Naive thymus-derived CD4-positive, alpha-beta T cell (primary cell): ENCODE measurements at regions of chr11 and their contacts with region 1.

Region 1: DNA sequence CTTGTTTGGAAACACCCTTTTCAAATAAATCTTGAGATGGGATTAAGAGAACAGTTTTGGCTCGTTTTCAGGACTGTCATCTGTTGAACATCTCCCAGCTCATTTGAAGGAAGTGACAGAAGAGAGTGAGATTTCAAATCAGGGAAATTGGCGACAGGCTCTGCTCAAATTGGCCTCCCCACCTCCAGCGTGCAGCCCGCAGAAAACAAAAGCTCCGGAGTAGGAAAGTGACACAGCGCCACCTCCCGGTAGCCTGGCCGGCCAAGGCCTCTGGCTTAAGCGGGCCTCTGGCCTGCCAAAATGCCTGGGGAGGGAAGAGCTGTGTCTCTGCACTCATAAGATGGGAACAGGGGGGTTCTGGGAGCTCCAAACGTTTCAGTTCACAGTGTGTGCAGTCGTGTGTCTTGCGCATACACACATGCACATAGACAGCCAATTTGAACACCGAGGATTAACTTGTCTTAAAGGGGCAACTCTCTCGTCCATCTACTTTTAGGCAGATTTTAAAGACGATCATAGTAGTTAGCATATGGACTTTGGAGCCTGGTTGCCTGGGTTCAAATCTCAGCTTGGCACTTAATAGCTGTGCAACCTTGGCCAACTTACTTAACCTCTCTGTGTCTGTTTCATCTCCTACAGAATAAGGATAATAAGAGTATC is 132.7 kb upstream of the RCN1 start:
- DNase-seq: peak in 8 of 9 donors; percentile 13 to 70 (median 31)
- ATAC-seq: peak; percentile 49
- H3K4me3 ChIP-seq: no peak overlapping the region
- H3K4me3 Mint-ChIP-seq: no peak overlapping the region
- H3K27ac ChIP-seq: no peak overlapping the region
- H3K27ac Mint-ChIP-seq: no peak overlapping the region
- H3K4me1 ChIP-seq: no peaks in the 10 kb centered on the region
- H3K4me1 Mint-ChIP-seq: peaks cover 0 to 7% (median 0%) of the 10 kb centered on the region in 7 donors
- H3K27me3 ChIP-seq: no peaks in the 10 kb centered on the region
- H3K27me3 Mint-ChIP-seq: peaks cover 0 to 13% (median 4%) of the 10 kb centered on the region in 5 donors

Region 2: DNA sequence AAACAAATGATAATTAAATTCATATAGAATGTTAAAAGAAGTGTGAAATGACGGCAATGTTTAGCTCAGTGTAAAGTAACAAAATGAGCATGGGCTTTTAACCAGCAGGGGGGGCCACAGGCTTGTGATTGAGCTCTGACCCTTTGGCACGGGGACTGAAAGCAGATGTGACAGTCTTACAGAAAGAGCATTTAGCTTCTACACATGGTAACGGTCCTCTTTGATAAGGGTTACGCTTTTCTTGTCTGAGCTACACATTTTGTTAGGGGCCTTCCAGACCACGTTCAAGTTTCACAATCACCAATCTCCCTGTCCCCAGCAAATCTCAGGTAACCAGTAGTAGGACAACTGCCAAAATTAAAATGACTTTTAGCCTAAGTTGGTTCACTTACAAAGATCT is 851.1 kb before region 1 on chr11:
- CTCF ChIA-PET with region 1: no interaction called
- POLR2A ChIA-PET with region 1: no interaction called
- intact Hi-C with region 1: loop called in 1 of 2 experiments (anchors 1 kb)
- DNase-seq: peak in 6 of 9 donors; percentile 1 to 25 (median 20)
- ATAC-seq: no peak
- H3K4me3 ChIP-seq: no peak overlapping the region
- H3K4me3 Mint-ChIP-seq: no peak overlapping the region
- H3K27ac ChIP-seq: no peak overlapping the region
- H3K27ac Mint-ChIP-seq: no peak overlapping the region
- H3K4me1 ChIP-seq: no peaks in the 10 kb centered on the region
- H3K4me1 Mint-ChIP-seq: no peaks in the 10 kb centered on the region
- H3K27me3 ChIP-seq: no peaks in the 10 kb centered on the region
- H3K27me3 Mint-ChIP-seq: peaks cover 0 to 10% (median 0%) of the 10 kb centered on the region in 5 donors

Region 3: DNA sequence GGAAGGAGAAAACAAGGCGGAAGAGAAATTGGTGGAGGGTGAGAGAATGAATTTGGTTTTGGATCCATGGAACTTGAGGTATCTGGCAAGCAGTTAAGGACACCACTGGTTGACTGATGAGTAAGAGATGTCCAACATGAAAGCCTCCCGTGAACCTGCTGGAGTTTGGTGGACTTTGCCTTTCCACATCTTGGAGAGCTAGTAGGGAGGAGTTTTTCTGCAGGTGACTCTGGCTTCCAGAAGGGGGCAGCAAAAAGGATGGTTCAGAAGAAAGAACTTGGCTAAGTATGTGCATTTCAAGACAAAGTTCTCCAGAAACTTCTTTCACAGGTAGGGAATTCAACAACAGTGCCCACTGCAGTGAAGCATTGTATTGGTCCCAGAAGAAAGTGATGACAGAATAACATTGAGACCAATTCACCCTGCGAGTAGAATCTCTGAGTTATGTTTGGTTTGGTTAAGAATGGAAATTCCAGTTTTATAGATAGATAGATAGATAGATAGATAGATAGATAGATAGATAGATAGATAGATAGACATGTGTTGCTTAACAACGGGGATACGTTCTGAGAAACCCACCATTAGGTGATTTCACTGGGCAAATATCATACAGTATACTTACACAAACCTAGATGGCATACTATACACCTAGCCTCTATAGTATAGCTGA is 617.2 kb before region 1 on chr11:
- CTCF ChIA-PET with region 1: no interaction called
- POLR2A ChIA-PET with region 1: no interaction called
- intact Hi-C with region 1: loop called in 1 of 2 experiments (anchors 2 kb)
- DNase-seq: peak in 5 of 9 donors; percentile 9 to 24 (median 13)
- ATAC-seq: no peak
- H3K4me3 ChIP-seq: no peak overlapping the region
- H3K4me3 Mint-ChIP-seq: no peak overlapping the region
- H3K27ac ChIP-seq: no peak overlapping the region
- H3K27ac Mint-ChIP-seq: no peak overlapping the region
- H3K4me1 ChIP-seq: no peaks in the 10 kb centered on the region
- H3K4me1 Mint-ChIP-seq: peaks cover 0 to 3% (median 0%) of the 10 kb centered on the region in 7 donors
- H3K27me3 ChIP-seq: no peaks in the 10 kb centered on the region
- H3K27me3 Mint-ChIP-seq: peaks cover 5 to 27% (median 18%) of the 10 kb centered on the region in 5 donors

Region 4: DNA sequence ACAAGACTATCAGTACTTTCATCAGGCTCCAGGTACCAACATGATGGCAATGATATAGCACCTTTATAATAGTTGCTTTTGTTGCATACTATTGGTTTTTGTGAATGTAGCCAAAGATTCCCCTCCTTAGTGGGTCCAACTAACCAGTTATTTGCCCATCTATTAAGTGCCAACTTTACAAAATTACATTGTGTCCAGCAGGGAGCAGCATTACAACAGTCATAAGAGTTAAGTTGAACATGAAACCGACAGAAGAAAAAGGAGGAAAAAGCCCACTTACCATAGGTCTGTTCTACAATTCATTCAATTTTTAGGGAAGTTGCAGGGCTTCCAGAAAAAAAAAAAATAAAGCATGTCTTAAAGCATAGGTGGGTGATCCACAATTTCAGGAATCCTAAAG is 470.4 kb before region 1 on chr11:
- CTCF ChIA-PET with region 1: no interaction called
- POLR2A ChIA-PET with region 1: no interaction called
- intact Hi-C with region 1: loop called (anchors 1 to 2 kb)
- DNase-seq: peak in 4 of 9 donors; percentile 10 to 26 (median 15)
- ATAC-seq: peak; percentile 32
- H3K4me3 ChIP-seq: no peak overlapping the region
- H3K4me3 Mint-ChIP-seq: no peak overlapping the region
- H3K27ac ChIP-seq: no peak overlapping the region
- H3K27ac Mint-ChIP-seq: no peak overlapping the region
- H3K4me1 ChIP-seq: no peaks in the 10 kb centered on the region
- H3K4me1 Mint-ChIP-seq: peaks cover 6 to 46% (median 40%) of the 10 kb centered on the region in 7 donors
- H3K27me3 ChIP-seq: no peaks in the 10 kb centered on the region
- H3K27me3 Mint-ChIP-seq: no peaks in the 10 kb centered on the region

Region 5: DNA sequence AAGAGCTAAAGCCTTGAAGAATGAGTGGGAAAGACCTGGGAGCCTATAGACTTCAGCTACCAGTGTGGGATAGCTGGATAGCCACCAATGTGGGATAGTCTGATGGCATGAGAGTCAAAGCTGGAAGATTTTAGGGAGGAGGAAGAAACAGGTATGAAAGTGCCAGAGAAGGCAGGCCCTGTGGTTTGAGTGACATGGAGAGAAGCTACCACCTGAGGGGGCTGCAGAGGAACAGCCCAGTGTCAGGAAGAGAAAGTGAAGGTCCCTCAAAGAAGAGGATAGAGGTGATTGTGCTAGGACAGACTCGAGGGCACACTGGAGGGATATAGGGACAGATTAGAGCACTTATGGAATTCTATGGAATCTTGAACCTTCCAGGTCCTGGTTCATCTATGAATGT is 124.0 kb before region 1 on chr11:
- CTCF ChIA-PET with region 1: no interaction called
- POLR2A ChIA-PET with region 1: no interaction called
- intact Hi-C with region 1: loop called in 1 of 2 experiments (anchors 5 kb)
- DNase-seq: no peak
- ATAC-seq: no peak
- H3K4me3 ChIP-seq: no peak overlapping the region
- H3K4me3 Mint-ChIP-seq: no peak overlapping the region
- H3K27ac ChIP-seq: no peak overlapping the region
- H3K27ac Mint-ChIP-seq: no peak overlapping the region
- H3K4me1 ChIP-seq: no peaks in the 10 kb centered on the region
- H3K4me1 Mint-ChIP-seq: no peaks in the 10 kb centered on the region
- H3K27me3 ChIP-seq: peaks cover 0 to 2% of the 10 kb centered on the region in 2 donors
- H3K27me3 Mint-ChIP-seq: peaks cover 29 to 39% (median 36%) of the 10 kb centered on the region in 5 donors

Region 6: GRCh38 chr11:31974366-31975136 is 16.3 kb after region 1 on chr11:
- CTCF ChIA-PET with region 1: no interaction called
- POLR2A ChIA-PET with region 1: no interaction called
- intact Hi-C with region 1: no loop called
- DNase-seq: no peak
- ATAC-seq: no peak
- H3K4me3 ChIP-seq: no peak overlapping the region
- H3K4me3 Mint-ChIP-seq: no peak overlapping the region
- H3K27ac ChIP-seq: no peak overlapping the region
- H3K27ac Mint-ChIP-seq: no peak overlapping the region
- H3K4me1 ChIP-seq: no peaks in the 10 kb centered on the region
- H3K4me1 Mint-ChIP-seq: no peaks in the 10 kb centered on the region
- H3K27me3 ChIP-seq: no peaks in the 10 kb centered on the region
- H3K27me3 Mint-ChIP-seq: peaks cover 21 to 39% (median 35%) of the 10 kb centered on the region in 5 donors